Activated CD4-positive, alpha-beta memory T cell treated with anti-CD3 and anti-CD28 coated beads, Interleukin-2, amount 10 ng/mL, durations not matched to agents 7 days and 5 days (primary cell): ENCODE measurements at regions of chr10 and their contacts with region 1.

Region 1: GRCh38 chr10:25875556-25876165 is 58.4 kb upstream of the MYO3A start:
- DNase-seq: peak; percentile 59
- H3K4me3 Mint-ChIP-seq: no peak overlapping the region
- H3K27ac Mint-ChIP-seq: no peak overlapping the region
- H3K4me1 Mint-ChIP-seq: no peaks in the 10 kb centered on the region
- H3K27me3 Mint-ChIP-seq: no peaks in the 10 kb centered on the region

Region 2: GRCh38 chr10:25852364-25852941 is 23.2 kb before region 1 on chr10:
- CTCF ChIA-PET with region 1: interaction called, 13 read pairs
- POLR2A ChIA-PET with region 1: no interaction called
- DNase-seq: no peak
- H3K4me3 Mint-ChIP-seq: no peak overlapping the region
- H3K27ac Mint-ChIP-seq: no peak overlapping the region
- H3K4me1 Mint-ChIP-seq: no peaks in the 10 kb centered on the region
- H3K27me3 Mint-ChIP-seq: no peaks in the 10 kb centered on the region

Region 3: GRCh38 chr10:25865267-25865666 is 10.4 kb before region 1 on chr10:
- CTCF ChIA-PET with region 1: interaction called, 12 read pairs
- POLR2A ChIA-PET with region 1: no interaction called
- DNase-seq: no peak
- H3K4me3 Mint-ChIP-seq: no peak overlapping the region
- H3K27ac Mint-ChIP-seq: no peak overlapping the region
- H3K4me1 Mint-ChIP-seq: no peaks in the 10 kb centered on the region
- H3K27me3 Mint-ChIP-seq: no peaks in the 10 kb centered on the region

Region 4: DNA sequence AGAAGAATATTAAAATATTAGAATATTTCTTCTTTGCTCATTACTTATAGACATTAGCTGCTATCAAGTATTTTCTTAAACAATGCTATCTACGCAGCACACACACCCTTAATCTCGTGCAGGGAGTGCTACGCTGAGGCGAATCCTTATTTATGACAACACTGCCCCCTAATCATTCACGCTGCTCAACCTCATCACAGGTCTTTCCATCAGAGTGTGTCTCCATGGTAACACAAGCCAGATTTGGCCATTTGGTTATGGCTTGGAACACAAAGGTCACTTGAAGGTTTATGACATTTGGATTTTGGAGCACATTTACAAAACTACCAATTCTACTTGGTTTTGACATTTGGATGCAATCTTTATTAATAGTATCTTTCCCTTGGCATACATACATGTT is 13.0 kb after region 1 on chr10:
- CTCF ChIA-PET with region 1: interaction called, 13 read pairs
- POLR2A ChIA-PET with region 1: no interaction called
- DNase-seq: no peak
- H3K4me3 Mint-ChIP-seq: no peak overlapping the region
- H3K27ac Mint-ChIP-seq: no peak overlapping the region
- H3K4me1 Mint-ChIP-seq: no peaks in the 10 kb centered on the region
- H3K27me3 Mint-ChIP-seq: no peaks in the 10 kb centered on the region

Region 5: DNA sequence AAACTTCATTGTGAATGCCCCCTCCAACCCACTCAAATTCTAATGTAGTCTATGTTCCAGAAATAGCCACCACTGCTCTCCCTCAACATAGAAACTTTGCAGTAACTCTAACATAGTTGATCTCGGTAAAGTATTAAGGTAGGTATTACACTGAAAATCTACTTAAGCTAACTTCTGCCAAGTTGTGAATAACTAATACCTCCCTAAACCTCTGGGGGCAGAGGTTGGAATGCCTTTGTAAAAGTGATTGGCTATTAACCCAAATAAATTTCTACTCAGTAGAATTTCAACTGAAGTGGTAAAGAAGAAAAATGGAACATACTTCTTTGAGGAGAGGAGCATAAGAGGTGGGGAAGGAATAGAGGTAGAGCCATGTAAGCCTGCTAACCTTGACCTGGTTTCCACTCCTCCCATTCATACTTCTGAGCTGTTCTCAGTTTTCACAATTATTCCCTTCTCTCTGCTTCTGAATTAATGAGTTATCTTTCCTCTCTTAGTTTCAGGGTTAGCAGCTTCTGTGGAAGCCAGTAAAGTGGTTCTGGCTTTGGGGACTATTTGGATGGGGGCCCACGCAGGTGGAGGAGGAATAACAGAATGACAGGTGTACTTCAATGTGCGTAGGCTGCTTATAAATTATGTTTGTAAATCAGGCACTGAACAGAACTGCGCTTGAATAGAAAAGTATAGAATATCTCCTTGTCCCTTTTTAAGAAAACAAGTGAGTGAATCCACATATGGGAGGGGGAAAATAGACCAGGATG is 211.8 kb after region 1 on chr10:
- CTCF ChIA-PET with region 1: no interaction called
- POLR2A ChIA-PET with region 1: no interaction called
- DNase-seq: no peak
- H3K4me3 Mint-ChIP-seq: no peak overlapping the region
- H3K27ac Mint-ChIP-seq: no peak overlapping the region
- H3K4me1 Mint-ChIP-seq: no peaks in the 10 kb centered on the region
- H3K27me3 Mint-ChIP-seq: peaks cover 2% of the 10 kb centered on the region